ENCODE measurements at regions of chr16 and their contacts with region 1.

Region 1: GRCh38 chr16:29182501-29182900 is 197.6 kb downstream of the LAT start:
- DNase-seq: no peak
- ATAC-seq: no peak
- H3K4me3 ChIP-seq: no peak overlapping the region
- H3K27ac ChIP-seq: no peak overlapping the region
- H3K4me1 ChIP-seq: peaks cover 18 to 53% of the 10 kb centered on the region in 2 experiments; a peak in 4 of 5 replicates
- H3K27me3 ChIP-seq: no peaks in the 10 kb centered on the region
- CTCF ChIP-seq: no peak
- EP300 ChIP-seq: no peak
- POLR2A ChIP-seq: no peak
- RAD21 ChIP-seq: no peak

Region 2: GRCh38 chr16:29112755-29113347 is 69.7 kb before region 1 on chr16:
- CTCF ChIA-PET with region 1: no interaction called
- POLR2A ChIA-PET with region 1: no interaction called
- in situ Hi-C with region 1: no loop called
- intact Hi-C with region 1: no loop called
- DNase-seq: no peak
- ATAC-seq: no peak
- H3K4me3 ChIP-seq: no peak overlapping the region
- H3K27ac ChIP-seq: no peak overlapping the region
- H3K4me1 ChIP-seq: peaks cover 3 to 13% of the 10 kb centered on the region in 2 experiments; a peak in 4 of 5 replicates
- H3K27me3 ChIP-seq: peaks cover 11 to 23% of the 10 kb centered on the region in 2 experiments
- CTCF ChIP-seq: no peak
- EP300 ChIP-seq: no peak
- POLR2A ChIP-seq: no peak
- RAD21 ChIP-seq: 0 out of 4 replicates have a peak, but pooled peaks of 1 of the 2 experiments have one; percentile 5

Region 3: DNA sequence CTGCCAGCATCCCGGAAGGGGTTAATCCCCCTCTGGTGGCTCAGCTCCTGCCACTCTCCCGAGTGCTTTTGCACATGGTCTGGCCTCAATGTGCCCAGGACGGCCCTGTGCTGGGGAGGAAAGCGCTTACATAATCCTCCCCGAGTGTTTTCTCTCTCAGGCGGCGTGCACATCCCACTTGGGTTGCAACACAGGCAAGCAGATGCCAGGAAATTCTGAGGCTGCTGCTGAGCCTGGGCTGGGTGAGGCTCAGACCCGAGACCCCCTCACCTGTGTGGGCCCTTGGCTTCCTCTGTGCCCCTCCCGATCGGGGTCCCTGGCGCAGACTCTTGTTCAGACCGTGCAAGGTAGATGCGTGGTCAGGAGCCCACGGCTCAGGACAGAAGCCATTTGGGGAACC is 53.0 kb before region 1 on chr16:
- CTCF ChIA-PET with region 1: no interaction called
- POLR2A ChIA-PET with region 1: no interaction called
- in situ Hi-C with region 1: loop called (anchors 10 kb)
- intact Hi-C with region 1: no loop called
- DNase-seq: no peak
- ATAC-seq: no peak
- H3K4me3 ChIP-seq: no peak overlapping the region
- H3K27ac ChIP-seq: no peak overlapping the region
- H3K4me1 ChIP-seq: peaks cover 0 to 23% of the 10 kb centered on the region in 2 experiments; a peak in 2 of 5 replicates
- H3K27me3 ChIP-seq: peaks cover 2 to 17% of the 10 kb centered on the region in 2 experiments; a peak in 2 of 5 replicates
- CTCF ChIP-seq: no peak
- EP300 ChIP-seq: no peak
- POLR2A ChIP-seq: no peak
- RAD21 ChIP-seq: no peak

Measured in K562 (cell line).